ENCODE measurements at regions of chr9 and their contacts with region 1.

Region 1: DNA sequence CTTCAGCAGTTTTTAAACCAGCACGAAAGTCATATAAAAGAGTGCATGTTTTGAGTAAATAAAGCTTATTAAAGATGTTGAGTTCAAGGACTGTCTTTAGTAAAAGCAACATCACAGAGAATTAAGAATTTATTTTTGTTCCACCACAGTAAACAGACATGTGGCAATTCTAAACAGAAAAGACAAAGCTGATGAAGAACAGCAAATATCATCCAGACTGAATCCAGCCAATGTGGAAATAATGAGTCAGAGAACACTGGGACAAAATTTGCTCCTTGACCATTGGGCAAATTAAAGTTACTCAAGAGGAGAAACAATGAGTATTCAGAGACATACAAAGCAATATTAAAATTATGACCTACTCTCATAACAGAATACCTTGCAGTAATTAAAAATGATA is 28.8 kb downstream of the OR2K2 start:
- DNase-seq: no peak
- ATAC-seq: no peak

Region 2: GRCh38 chr9:110638381-110638954 is 662.7 kb before region 1 on chr9:
- intact Hi-C with region 1: loop called (anchors 5 kb)
- DNase-seq: no peak
- ATAC-seq: no peak